ENCODE measurements at regions of chr13 and their contacts with region 1.

Region 1: GRCh38 chr13:97221989-97222700 is at the start of gene MBNL2:
- DNase-seq: peak; percentile 95
- H3K4me3 ChIP-seq: peak within 1 kb of the TSS; percentile 35 to 45
- H3K27ac ChIP-seq: peak within 1 kb of the TSS; percentile 85
- H3K4me1 ChIP-seq: peaks cover 4% of the 10 kb centered on the region
- H3K27me3 ChIP-seq: no peaks in the 10 kb centered on the region
- CTCF ChIP-seq: no peak
- POLR2A ChIP-seq: peak; percentile 89
- total RNA-seq, gene MBNL2: 59.1 to 85.7 TPM

Region 2: DNA sequence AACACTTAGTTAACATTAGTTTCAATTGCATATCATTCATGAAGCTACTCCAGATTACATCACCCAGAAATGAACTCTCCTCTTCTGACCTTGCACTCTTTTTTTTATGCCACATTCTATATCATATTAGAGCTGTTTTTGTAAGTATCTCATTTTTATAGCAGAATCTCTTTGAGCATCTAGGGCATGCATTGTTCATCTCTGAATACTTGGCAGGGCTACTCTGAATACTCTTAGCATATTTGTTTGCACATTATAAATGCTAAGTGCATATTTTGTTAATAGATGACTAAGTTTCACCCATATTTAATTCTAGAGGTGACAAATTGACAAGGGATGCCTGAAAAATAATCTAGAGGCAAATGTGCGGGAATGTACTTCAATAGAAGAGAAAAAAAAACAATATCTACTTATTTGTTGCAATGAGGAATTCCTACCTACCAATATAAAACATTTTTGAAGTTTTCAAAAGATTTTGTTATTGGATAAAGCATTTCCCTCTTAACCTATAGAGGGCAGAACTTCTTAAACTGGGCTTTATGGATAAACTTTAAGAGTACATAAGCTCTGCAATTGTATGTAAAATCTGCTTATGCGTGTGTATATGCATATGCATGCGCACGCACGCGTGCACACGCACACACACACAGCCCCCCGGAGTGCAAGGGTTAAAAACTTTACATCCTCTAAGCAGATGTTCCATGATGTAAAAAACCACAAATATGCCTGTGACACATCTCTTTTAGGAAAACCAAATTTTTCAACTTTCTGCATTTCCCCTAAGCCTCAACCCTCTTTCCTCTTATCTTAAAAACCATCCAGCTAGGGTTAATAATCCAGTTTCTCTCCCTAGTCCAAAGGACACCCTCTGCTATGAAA is 154.9 kb before region 1 on chr13:
- intact Hi-C with region 1: no loop called
- DNase-seq: no peak
- H3K4me3 ChIP-seq: no peak overlapping the region
- H3K27ac ChIP-seq: no peak overlapping the region
- H3K4me1 ChIP-seq: no peaks in the 10 kb centered on the region
- H3K27me3 ChIP-seq: no peaks in the 10 kb centered on the region
- CTCF ChIP-seq: no peak
- POLR2A ChIP-seq: no peak

Region 3: DNA sequence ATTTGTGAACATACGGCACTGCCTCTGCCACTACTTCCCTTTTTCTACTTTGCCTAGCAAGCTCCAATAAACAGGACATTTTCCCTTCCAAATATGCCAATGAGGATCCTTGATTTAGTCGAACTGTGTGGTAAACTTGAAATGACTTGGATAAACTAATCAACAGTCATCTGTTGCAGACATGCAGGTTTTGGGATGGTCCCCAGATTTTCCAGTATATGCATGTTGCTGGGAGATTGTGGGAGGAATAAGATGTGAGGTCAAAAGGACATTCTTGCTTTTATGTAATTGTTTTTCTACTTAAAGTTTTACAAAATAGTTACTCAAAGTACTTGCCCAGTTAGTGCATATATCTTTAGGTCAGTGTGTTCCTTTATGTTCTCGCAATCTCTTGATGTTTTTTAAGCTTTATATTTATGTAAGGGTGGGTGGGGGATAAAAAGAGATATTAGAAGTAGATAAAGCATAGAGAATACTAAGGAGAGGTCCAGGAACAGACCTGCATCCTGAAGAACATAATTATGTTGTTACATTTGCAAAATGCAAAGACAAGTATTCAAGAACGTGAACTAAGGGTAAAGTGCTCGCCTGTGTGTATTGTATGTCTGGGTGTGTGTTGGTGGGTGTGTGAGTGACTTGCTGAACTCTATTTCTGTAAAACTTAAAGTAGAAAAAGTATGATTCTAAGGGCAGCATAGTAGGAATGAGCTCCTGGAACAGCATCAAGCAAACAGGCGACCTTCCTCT is 139.5 kb before region 1 on chr13:
- intact Hi-C with region 1: no loop called
- DNase-seq: no peak
- H3K4me3 ChIP-seq: no peak overlapping the region
- H3K27ac ChIP-seq: no peak overlapping the region
- H3K4me1 ChIP-seq: no peaks in the 10 kb centered on the region
- H3K27me3 ChIP-seq: no peaks in the 10 kb centered on the region
- CTCF ChIP-seq: no peak
- POLR2A ChIP-seq: no peak

Region 4: GRCh38 chr13:97261254-97262005 is 39.3 kb after region 1 on chr13:
- intact Hi-C with region 1: loop called (anchors 5 kb)
- DNase-seq: no peak
- H3K4me3 ChIP-seq: no peak overlapping the region
- H3K27ac ChIP-seq: no peak overlapping the region
- H3K4me1 ChIP-seq: peaks cover 5% of the 10 kb centered on the region
- H3K27me3 ChIP-seq: no peaks in the 10 kb centered on the region
- CTCF ChIP-seq: no peak
- POLR2A ChIP-seq: no peak

Region 5: GRCh38 chr13:97280478-97280877 is 58.3 kb after region 1 on chr13:
- intact Hi-C with region 1: loop called (anchors 10 kb)
- DNase-seq: no peak
- H3K4me3 ChIP-seq: no peak overlapping the region
- H3K27ac ChIP-seq: peak overlapping the region; percentile 20 to 29
- H3K4me1 ChIP-seq: peaks cover 13% of the 10 kb centered on the region
- H3K27me3 ChIP-seq: no peaks in the 10 kb centered on the region
- CTCF ChIP-seq: no peak
- POLR2A ChIP-seq: no peak

Region 6: DNA sequence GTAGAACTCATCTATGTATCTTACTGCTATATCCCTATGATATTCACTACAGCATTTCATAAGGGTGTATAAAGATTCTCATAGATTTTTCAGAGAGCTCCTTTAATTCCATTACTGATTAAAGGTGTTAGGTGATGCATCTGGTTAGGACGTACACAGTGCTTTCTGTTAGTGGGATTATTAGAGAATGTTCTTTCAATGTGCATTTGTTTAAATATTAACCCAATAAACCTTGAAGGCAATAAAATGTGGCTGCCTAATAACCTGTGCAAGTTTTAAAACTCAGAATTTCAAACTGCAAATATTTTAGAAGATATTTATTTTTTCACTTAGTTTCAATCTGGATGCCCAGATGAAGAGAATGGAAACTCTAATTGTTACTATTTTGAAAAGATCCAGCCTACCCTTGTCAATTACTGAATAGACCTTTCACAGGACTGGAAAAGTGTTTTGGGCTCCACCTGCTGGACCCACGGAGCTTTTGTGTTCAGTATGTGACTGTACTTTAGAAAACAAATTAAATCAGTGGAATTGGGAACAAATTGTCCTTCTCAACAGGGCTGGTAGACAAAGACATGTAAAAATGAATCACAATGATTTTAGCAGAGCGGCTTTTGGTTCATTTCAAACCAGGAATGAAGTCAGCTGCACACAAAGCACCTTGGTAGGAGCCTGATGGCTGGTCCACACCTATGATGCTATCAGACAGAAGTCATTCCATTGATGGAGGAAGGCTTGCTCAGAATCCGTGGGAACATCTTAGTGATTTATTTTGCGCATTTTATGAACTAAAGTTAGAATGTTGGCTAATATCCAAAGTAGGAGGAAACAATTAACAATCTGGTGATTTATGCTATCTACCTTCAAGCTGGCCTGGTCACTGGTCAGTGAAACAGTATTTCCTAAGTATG is 122.4 kb after region 1 on chr13:
- intact Hi-C with region 1: loop called (anchors 5 kb)
- DNase-seq: peak; percentile 42
- H3K4me3 ChIP-seq: no peak overlapping the region
- H3K27ac ChIP-seq: no peak overlapping the region
- H3K4me1 ChIP-seq: no peaks in the 10 kb centered on the region
- H3K27me3 ChIP-seq: no peaks in the 10 kb centered on the region
- CTCF ChIP-seq: peak; percentile 33 to 73 (median 59)
- POLR2A ChIP-seq: no peak

Region 7: GRCh38 chr13:97432917-97433726 is 211.0 kb after region 1 on chr13:
- intact Hi-C with region 1: loop called (anchors 5 kb)
- DNase-seq: peak; percentile 99
- H3K4me3 ChIP-seq: peak overlapping the region; percentile 77 to 80
- H3K27ac ChIP-seq: peak overlapping the region; percentile 100
- H3K4me1 ChIP-seq: no peaks in the 10 kb centered on the region
- H3K27me3 ChIP-seq: no peaks in the 10 kb centered on the region
- CTCF ChIP-seq: peak in 1 of 4 experiments; percentile 8
- POLR2A ChIP-seq: peak; percentile 55

Region 8: GRCh38 chr13:98216135-98216565 is 994.0 kb after region 1 on chr13:
- intact Hi-C with region 1: loop called (anchors 5 kb)
- DNase-seq: no peak
- H3K4me3 ChIP-seq: no peak overlapping the region
- H3K27ac ChIP-seq: no peak overlapping the region
- H3K4me1 ChIP-seq: peaks cover 16% of the 10 kb centered on the region
- H3K27me3 ChIP-seq: no peaks in the 10 kb centered on the region
- CTCF ChIP-seq: no peak
- POLR2A ChIP-seq: no peak

Measured in prostate gland (tissue), 2 donors.